ENCODE measurements at regions of chr7 and their contacts with region 1.

Region 1: GRCh38 chr7:143008007-143008901 is 18.7 kb downstream of the OR9A2 start:
- DNase-seq: peak; percentile 83
- ATAC-seq: peak; percentile 86
- H3K4me3 Mint-ChIP-seq: no peak overlapping the region
- H3K27ac Mint-ChIP-seq: no peak overlapping the region
- H3K4me1 Mint-ChIP-seq: peaks cover 6% of the 10 kb centered on the region
- H3K27me3 Mint-ChIP-seq: peaks cover 20% of the 10 kb centered on the region

Region 2: GRCh38 chr7:142853739-142854371 is 154.4 kb before region 1 on chr7:
- CTCF ChIA-PET with region 1: interaction called, 23 read pairs
- DNase-seq: peak; percentile 78
- ATAC-seq: peak; percentile 84
- H3K4me3 Mint-ChIP-seq: peak overlapping the region; percentile 88
- H3K27ac Mint-ChIP-seq: peak overlapping the region; percentile 77
- H3K4me1 Mint-ChIP-seq: peaks cover 4% of the 10 kb centered on the region
- H3K27me3 Mint-ChIP-seq: peaks cover 15% of the 10 kb centered on the region

Region 3: GRCh38 chr7:142873281-142873787 is 134.9 kb before region 1 on chr7:
- CTCF ChIA-PET with region 1: interaction called, 22 read pairs
- DNase-seq: peak; percentile 50
- ATAC-seq: peak; percentile 54
- H3K4me3 Mint-ChIP-seq: no peak overlapping the region
- H3K27ac Mint-ChIP-seq: no peak overlapping the region
- H3K4me1 Mint-ChIP-seq: no peaks in the 10 kb centered on the region
- H3K27me3 Mint-ChIP-seq: no peaks in the 10 kb centered on the region

Region 4: DNA sequence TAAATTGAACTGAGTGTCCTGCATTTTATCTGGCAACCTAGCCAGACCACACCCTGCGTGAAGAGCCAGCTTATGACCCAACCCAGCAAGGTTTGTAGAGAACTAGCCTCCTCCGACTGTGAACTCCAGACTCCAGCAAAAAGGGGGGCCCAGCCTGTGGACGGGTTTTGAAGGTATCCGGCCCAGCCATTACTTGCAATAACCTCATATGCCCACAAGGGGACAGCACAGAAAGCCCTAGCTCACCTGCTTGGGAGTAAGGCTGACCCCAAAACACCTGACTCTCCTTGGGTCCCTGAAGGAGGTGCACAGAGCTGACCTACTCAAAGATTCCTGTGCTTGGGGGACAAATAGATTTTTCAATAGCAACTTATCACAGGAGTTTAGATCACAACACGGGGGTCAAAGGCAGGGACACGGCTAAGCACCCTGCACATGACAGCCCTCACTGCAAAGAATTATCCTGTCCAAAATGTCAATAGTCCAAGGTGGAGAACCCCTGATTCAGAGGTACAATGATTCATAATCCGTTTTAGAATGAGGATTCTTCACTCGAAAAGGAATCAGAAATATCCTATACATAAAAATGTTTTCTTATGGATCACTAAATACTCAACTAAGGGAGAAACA is 127.3 kb before region 1 on chr7:
- CTCF ChIA-PET with region 1: interaction called, 25 read pairs
- DNase-seq: peak; percentile 59
- ATAC-seq: peak; percentile 79
- H3K4me3 Mint-ChIP-seq: no peak overlapping the region
- H3K27ac Mint-ChIP-seq: no peak overlapping the region
- H3K4me1 Mint-ChIP-seq: no peaks in the 10 kb centered on the region
- H3K27me3 Mint-ChIP-seq: peaks cover 13% of the 10 kb centered on the region

Region 5: DNA sequence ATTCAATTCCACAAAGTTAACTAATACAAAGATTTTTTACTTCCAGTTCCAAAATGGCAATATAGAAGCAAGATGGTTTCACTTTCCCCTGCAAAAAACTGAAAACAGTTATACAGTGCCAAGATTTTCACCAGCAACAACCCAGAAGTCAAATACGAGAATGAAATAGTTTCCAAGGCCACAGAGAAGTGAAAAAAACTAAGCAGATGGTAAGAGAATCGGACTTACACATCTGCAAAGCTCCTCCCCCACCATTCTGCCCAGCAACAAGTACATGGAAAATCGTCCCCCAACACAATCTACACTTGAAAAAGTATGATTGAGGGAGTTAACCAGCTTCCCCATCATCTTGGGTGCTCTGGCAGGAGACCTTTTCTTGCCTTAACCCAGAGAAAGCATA is 15.8 kb before region 1 on chr7:
- CTCF ChIA-PET with region 1: interaction called, 10 read pairs
- DNase-seq: no peak
- ATAC-seq: no peak
- H3K4me3 Mint-ChIP-seq: no peak overlapping the region
- H3K27ac Mint-ChIP-seq: no peak overlapping the region
- H3K4me1 Mint-ChIP-seq: no peaks in the 10 kb centered on the region
- H3K27me3 Mint-ChIP-seq: peaks cover 13% of the 10 kb centered on the region

Measured in activated CD8-positive, alpha-beta memory T cell treated with anti-CD3 and anti-CD28 coated beads, Interleukin-2, amount 10 ng/mL, durations not matched to agents 7 days and 5 days (primary cell).